CD4-positive, alpha-beta T cell (primary cell): ENCODE measurements at regions of chr7 and their contacts with region 1.

Region 1: GRCh38 chr7:37419496-37419895 is 29.2 kb downstream of the ELMO1 start:
- DNase-seq: no peak
- ATAC-seq: no peak
- H3K4me3 ChIP-seq: no peak overlapping the region
- H3K4me3 Mint-ChIP-seq: no peak overlapping the region
- H3K27ac ChIP-seq: no peak overlapping the region
- H3K27ac Mint-ChIP-seq: peak overlapping the region; percentile 21
- H3K4me1 ChIP-seq: peaks cover 12% of the 10 kb centered on the region
- H3K4me1 Mint-ChIP-seq: peaks cover 70% of the 10 kb centered on the region
- H3K27me3 ChIP-seq: no peaks in the 10 kb centered on the region
- H3K27me3 Mint-ChIP-seq: no peaks in the 10 kb centered on the region
- CTCF ChIP-seq: no peak

Region 2: DNA sequence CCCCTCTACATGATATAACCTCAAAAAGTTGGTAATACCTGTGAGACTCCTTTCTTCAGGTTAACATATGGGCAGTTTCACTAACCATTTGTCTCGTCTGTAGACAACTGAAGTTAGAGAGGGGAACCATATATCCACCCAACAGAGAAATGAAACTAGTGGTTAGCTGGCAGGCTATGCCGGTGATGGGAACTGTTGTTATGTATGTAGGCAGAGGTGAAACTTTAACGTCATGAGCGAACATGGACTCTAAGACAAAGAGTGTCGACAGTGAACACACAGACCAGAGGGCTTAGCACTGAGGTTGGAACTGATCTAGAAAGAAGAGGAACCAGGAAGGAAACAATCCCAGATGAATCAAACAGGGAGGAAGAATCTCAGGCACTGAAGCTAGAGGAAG is 83.2 kb before region 1 on chr7:
- CTCF ChIA-PET with region 1: no interaction called
- POLR2A ChIA-PET with region 1: no interaction called
- intact Hi-C with region 1: no loop called
- DNase-seq: peak in 4 of 14 experiments; percentile 13 to 58 (median 54)
- ATAC-seq: peak; percentile 76
- H3K4me3 ChIP-seq: no peak overlapping the region
- H3K4me3 Mint-ChIP-seq: peak overlapping the region; percentile 71
- H3K27ac ChIP-seq: no peak overlapping the region
- H3K27ac Mint-ChIP-seq: peak overlapping the region; percentile 76
- H3K4me1 ChIP-seq: peaks cover 25% of the 10 kb centered on the region
- H3K4me1 Mint-ChIP-seq: peaks cover 80% of the 10 kb centered on the region
- H3K27me3 ChIP-seq: no peaks in the 10 kb centered on the region
- H3K27me3 Mint-ChIP-seq: no peaks in the 10 kb centered on the region
- CTCF ChIP-seq: no peak

Region 3: DNA sequence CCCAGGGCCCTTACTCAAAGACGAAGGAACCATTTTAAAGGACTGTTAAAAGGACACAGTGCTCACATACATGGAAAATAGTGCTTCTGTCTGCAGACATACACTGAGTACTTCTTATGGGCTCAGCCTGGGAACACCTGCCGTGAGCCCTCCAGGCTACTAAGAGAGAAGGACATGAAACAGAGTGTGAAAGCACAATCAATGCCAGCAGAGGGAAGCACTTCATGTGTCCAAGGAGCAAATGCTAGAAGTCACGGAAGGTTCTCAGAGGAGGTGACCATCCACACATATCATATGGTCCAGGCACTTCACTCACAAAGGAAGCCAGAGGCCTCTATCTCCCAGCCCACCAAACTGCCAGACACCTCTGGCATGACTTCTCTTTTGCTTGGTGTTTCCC is 13.7 kb after region 1 on chr7:
- CTCF ChIA-PET with region 1: no interaction called
- POLR2A ChIA-PET with region 1: no interaction called
- intact Hi-C with region 1: loop called in 1 of 2 experiments (anchors 2 kb)
- DNase-seq: peak in 1 of 14 experiments; percentile 22
- ATAC-seq: no peak
- H3K4me3 ChIP-seq: no peak overlapping the region
- H3K4me3 Mint-ChIP-seq: peak overlapping the region; percentile 74
- H3K27ac ChIP-seq: no peak overlapping the region
- H3K27ac Mint-ChIP-seq: peak overlapping the region; percentile 83
- H3K4me1 ChIP-seq: peaks cover 33% of the 10 kb centered on the region
- H3K4me1 Mint-ChIP-seq: peaks cover 84% of the 10 kb centered on the region
- H3K27me3 ChIP-seq: no peaks in the 10 kb centered on the region
- H3K27me3 Mint-ChIP-seq: no peaks in the 10 kb centered on the region
- CTCF ChIP-seq: no peak